Lower leg skin (tissue), 4 donors: ENCODE measurements at regions of chr7 and their contacts with region 1.

Region 1: DNA sequence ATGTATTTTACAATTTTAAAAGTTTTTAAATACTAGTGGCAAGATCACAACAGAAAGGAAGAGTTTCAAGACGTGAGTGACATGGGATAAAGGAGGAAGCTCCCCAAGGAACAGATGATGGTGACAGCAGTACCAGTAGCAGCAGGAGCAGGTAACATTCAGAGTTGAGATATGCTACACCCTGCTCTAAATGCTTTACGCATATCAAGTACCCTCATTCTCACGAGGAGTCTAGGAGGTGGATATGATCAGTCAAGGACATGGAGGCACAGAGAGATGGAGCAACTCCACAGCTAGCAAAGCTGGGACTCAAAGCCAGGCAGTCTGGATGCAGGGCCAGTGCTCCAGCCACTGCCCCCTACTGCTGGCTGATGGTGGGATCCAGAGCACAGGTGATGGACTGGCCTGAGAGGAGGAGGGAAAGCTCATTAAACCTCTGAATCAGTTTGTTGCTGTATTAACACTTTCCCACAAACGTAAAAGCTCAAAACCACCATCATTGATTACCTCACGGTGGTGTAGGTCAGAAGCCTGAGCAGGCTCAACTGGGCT is 17.5 kb downstream of the RP9 start:
- DNase-seq: no peak
- H3K4me3 ChIP-seq: no peak overlapping the region
- CTCF ChIP-seq: no peak
- POLR2A ChIP-seq: no peak

Region 2: GRCh38 chr7:33101906-33102305 is 10.2 kb after region 1 on chr7:
- intact Hi-C with region 1: loop called (anchors 1 kb)
- DNase-seq: no peak
- H3K4me3 ChIP-seq: no peak overlapping the region
- CTCF ChIP-seq: no peak
- POLR2A ChIP-seq: no peak